Natural killer cell (primary cell): ENCODE measurements at regions of chr20 and their contacts with region 1.

Region 1: DNA sequence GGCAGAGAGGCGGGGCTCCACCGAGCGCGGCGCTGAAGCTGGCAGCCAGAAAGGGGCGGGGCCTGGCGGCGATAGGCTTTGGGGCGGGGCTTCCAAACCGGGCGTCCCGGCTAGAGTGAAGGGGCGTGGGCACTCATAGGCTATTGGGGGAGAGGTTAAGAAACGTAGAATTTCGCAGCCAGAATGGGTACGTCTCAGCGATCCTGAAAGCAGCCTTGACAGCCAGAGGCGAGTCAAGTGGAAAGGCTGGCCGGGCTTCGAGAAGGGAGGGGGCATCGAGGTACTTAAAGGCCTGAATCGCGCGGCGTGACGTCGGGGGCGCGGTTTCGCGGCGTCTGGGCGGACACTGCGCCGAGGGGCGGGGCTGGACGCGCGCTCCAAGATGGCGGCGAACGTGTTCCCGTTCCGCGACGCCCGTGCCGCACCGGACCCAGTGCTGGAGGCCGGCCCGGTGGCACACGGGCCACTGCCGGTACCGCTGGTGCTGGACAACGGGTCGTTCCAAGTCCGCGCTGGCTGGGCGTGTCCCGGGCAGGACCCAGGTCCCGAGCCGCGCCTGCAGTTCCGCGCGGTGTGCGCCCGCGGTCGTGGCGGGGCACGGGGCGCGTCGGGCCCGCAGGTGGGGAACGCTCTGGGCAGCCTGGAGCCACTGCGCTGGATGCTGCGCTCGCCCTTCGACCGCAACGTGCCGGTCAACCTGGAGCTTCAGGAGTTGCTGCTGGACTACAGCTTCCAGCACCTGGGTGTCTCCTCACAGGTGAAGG is at the start of gene ACTR5:
- DNase-seq: peak; percentile 97 to 98
- ATAC-seq: peak; percentile 91 to 98 (median 94)
- H3K4me3 ChIP-seq: peak within 1 kb of the TSS; percentile 74
- H3K4me3 Mint-ChIP-seq: peak within 1 kb of the TSS; percentile 98
- H3K27ac ChIP-seq: peak within 1 kb of the TSS; percentile 96
- H3K27ac Mint-ChIP-seq: peak within 1 kb of the TSS; percentile 97 to 98
- H3K4me1 ChIP-seq: peaks cover 19% of the 10 kb centered on the region
- H3K4me1 Mint-ChIP-seq: peaks cover 23 to 26% of the 10 kb centered on the region in 2 donors
- H3K27me3 ChIP-seq: no peaks in the 10 kb centered on the region
- H3K27me3 Mint-ChIP-seq: peaks cover 0 to 3% of the 10 kb centered on the region in 2 donors
- CTCF ChIP-seq: no peak
- total RNA-seq, gene ACTR5: 14.4 to 17.7 (median 17.6) TPM

Region 2: DNA sequence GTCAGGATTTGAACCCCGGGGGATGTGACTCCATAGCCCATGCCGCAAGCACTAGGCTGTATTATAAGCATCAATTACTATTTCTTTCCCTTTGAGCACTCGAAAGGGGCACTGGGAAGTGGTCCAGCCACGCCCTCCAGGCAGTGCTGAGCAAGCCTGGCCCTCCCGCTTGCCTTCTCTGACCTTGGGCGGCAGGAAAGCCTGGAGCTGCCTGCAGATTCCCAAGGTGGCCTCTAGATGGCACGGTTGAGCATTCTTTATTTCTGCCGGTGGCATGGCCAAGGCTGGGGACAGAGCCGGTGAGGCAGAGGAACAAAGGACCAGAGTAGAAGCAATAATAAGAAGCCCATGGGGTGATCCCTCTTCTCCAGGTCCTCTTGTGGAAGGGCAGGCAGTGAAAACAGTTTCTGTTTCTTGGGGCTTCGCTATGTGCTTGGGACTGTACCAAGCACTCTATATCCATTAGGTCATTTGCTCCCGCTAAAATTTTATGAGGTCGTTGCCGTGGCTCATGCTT is 114.6 kb before region 1 on chr20:
- intact Hi-C with region 1: loop called (anchors 2 kb)
- DNase-seq: peak; percentile 40 to 76
- ATAC-seq: peak; percentile 82 to 99 (median 95)
- H3K4me3 ChIP-seq: no peak overlapping the region
- H3K4me3 Mint-ChIP-seq: no peak overlapping the region
- H3K27ac ChIP-seq: no peak overlapping the region
- H3K27ac Mint-ChIP-seq: no peak overlapping the region
- H3K4me1 ChIP-seq: no peaks in the 10 kb centered on the region
- H3K4me1 Mint-ChIP-seq: peaks cover 0 to 6% of the 10 kb centered on the region in 2 donors
- H3K27me3 ChIP-seq: no peaks in the 10 kb centered on the region
- H3K27me3 Mint-ChIP-seq: peaks cover 16 to 21% of the 10 kb centered on the region in 2 donors
- CTCF ChIP-seq: peak; percentile 93

Region 3: GRCh38 chr20:38674092-38674764 is 74.1 kb before region 1 on chr20:
- intact Hi-C with region 1: loop called (anchors 1 kb)
- DNase-seq: peak; percentile 61 to 78
- ATAC-seq: peak; percentile 93 to 95 (median 94)
- H3K4me3 ChIP-seq: peak overlapping the region; percentile 76
- H3K4me3 Mint-ChIP-seq: peak overlapping the region; percentile 90
- H3K27ac ChIP-seq: peak overlapping the region; percentile 43
- H3K27ac Mint-ChIP-seq: peak overlapping the region; percentile 61 to 88
- H3K4me1 ChIP-seq: peaks cover 16% of the 10 kb centered on the region
- H3K4me1 Mint-ChIP-seq: peaks cover 5 to 17% of the 10 kb centered on the region in 2 donors
- H3K27me3 ChIP-seq: peaks cover 8% of the 10 kb centered on the region
- H3K27me3 Mint-ChIP-seq: peaks cover 9 to 14% of the 10 kb centered on the region in 2 donors
- CTCF ChIP-seq: no peak

Region 4: GRCh38 chr20:38730989-38731737 is 17.1 kb before region 1 on chr20:
- intact Hi-C with region 1: loop called (anchors 2 kb)
- DNase-seq: peak; percentile 74 to 88
- ATAC-seq: peak; percentile 78 to 83 (median 81)
- H3K4me3 ChIP-seq: peak overlapping the region; percentile 17
- H3K4me3 Mint-ChIP-seq: peak overlapping the region; percentile 67
- H3K27ac ChIP-seq: no peak overlapping the region
- H3K27ac Mint-ChIP-seq: peak overlapping the region in 1 of 2 donors; percentile 36
- H3K4me1 ChIP-seq: peaks cover 55% of the 10 kb centered on the region
- H3K4me1 Mint-ChIP-seq: peaks cover 45 to 47% of the 10 kb centered on the region in 2 donors
- H3K27me3 ChIP-seq: peaks cover 81% of the 10 kb centered on the region
- H3K27me3 Mint-ChIP-seq: peaks cover 85 to 88% of the 10 kb centered on the region in 2 donors
- CTCF ChIP-seq: peak; percentile 99

Region 5: DNA sequence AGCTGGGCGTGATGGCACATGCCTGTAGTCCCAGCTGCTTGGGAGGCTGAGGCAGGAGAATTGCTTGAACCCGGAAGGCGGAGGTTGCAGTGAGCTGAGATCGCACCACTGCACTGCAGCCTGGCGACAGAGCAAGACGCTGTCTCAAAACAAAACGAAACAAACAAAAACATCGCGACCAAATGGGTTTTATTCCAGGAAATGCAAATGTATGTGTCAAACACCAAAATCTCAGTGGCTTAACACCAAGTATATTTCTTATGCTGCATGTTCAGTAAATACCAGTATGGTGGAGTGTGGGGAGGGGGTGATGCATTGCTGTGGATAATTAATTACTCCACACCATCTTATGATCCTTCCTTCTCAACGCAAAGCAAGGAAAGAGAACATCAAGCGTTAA is 28.1 kb after region 1 on chr20:
- intact Hi-C with region 1: no loop called
- DNase-seq: peak; percentile 21 to 54
- ATAC-seq: peak; percentile 71 to 91 (median 83)
- H3K4me3 ChIP-seq: peak overlapping the region; percentile 2
- H3K4me3 Mint-ChIP-seq: peak overlapping the region; percentile 79
- H3K27ac ChIP-seq: peak overlapping the region; percentile 64
- H3K27ac Mint-ChIP-seq: peak overlapping the region; percentile 86 to 90
- H3K4me1 ChIP-seq: peaks cover 14% of the 10 kb centered on the region
- H3K4me1 Mint-ChIP-seq: peaks cover 16 to 23% of the 10 kb centered on the region in 2 donors
- H3K27me3 ChIP-seq: no peaks in the 10 kb centered on the region
- H3K27me3 Mint-ChIP-seq: no peaks in the 10 kb centered on the region
- CTCF ChIP-seq: no peak

Region 6: DNA sequence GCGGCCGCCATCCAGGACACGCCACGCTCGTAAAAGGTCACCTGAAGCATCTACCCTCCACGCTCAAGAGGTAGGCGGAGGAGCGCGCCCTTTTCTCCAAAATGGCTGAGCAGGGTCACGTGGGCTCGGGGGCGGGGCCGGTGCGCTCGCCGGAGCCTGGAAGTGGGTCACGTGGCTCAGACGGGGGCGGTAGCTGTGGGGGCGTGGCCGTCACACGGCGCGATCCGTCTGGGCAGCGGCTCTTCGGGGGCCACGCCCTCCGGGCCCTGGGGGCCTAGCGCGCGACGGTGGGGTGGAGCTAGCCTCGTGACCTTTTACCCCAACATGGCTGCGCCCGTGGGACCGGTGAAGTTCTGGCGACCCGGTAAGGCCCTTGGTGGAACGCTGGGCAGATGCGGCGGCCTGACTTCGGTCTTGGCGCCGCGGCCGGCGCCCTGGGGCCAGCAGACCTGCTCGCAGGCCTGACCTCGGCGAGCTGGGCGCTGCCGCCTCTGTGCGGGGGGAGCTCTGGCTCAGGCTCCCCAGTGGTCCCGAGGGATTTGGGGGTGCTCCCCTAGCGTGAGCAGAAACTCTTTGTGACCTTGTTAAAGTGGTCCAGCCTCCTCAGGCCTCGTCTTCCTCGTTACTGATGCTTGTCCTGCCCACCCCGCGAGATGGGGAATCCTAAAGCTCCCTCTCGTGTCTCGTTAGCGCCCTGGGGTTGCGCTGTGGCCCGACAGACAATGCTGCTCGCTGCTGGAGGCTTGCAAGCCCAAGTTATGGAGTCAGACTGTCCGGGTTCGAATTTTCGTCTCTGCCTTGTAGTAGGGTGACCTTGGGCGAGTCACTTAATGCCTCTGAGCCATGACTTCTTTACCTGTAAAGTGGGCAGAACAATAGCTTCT is 214.0 kb after region 1 on chr20 and contains the start of gene DHX35:
- intact Hi-C with region 1: loop called (anchors 1 kb)
- DNase-seq: peak; percentile 99 to 100
- ATAC-seq: peak; percentile 99 to 100 (median 99)
- H3K4me3 ChIP-seq: peak within 1 kb of the TSS; percentile 78
- H3K4me3 Mint-ChIP-seq: peak within 1 kb of the TSS; percentile 96
- H3K27ac ChIP-seq: peak within 1 kb of the TSS; percentile 78
- H3K27ac Mint-ChIP-seq: peak within 1 kb of the TSS; percentile 94 to 97
- H3K4me1 ChIP-seq: peaks cover 10% of the 10 kb centered on the region
- H3K4me1 Mint-ChIP-seq: peaks cover 18 to 19% of the 10 kb centered on the region in 2 donors
- H3K27me3 ChIP-seq: no peaks in the 10 kb centered on the region
- H3K27me3 Mint-ChIP-seq: no peaks in the 10 kb centered on the region
- CTCF ChIP-seq: no peak
- total RNA-seq, gene DHX35: 8.8 to 11.4 (median 10.2) TPM